B cell (primary cell): ENCODE measurements at regions of chr9 and their contacts with region 1.

Region 1: GRCh38 chr9:35657546-35658136 is at the start of gene RMRP:
- DNase-seq: peak; percentile 97
- ATAC-seq: peak; percentile 79
- H3K4me3 ChIP-seq: peak within 1 kb of the TSS; percentile 84 to 93 (median 87)
- H3K4me3 Mint-ChIP-seq: peak within 1 kb of the TSS; percentile 94
- H3K27ac ChIP-seq: peak within 1 kb of the TSS; percentile 99 to 100
- H3K27ac Mint-ChIP-seq: peak within 1 kb of the TSS; percentile 97
- H3K4me1 ChIP-seq: peaks cover 39 to 62% of the 10 kb centered on the region in 2 donors
- H3K4me1 Mint-ChIP-seq: peaks cover 66% of the 10 kb centered on the region
- H3K27me3 ChIP-seq: no peaks in the 10 kb centered on the region
- H3K27me3 Mint-ChIP-seq: no peaks in the 10 kb centered on the region
- CTCF ChIP-seq: no peak
- total RNA-seq, gene RMRP: 7,890 and 7,920 TPM in 2 replicates

Region 2: DNA sequence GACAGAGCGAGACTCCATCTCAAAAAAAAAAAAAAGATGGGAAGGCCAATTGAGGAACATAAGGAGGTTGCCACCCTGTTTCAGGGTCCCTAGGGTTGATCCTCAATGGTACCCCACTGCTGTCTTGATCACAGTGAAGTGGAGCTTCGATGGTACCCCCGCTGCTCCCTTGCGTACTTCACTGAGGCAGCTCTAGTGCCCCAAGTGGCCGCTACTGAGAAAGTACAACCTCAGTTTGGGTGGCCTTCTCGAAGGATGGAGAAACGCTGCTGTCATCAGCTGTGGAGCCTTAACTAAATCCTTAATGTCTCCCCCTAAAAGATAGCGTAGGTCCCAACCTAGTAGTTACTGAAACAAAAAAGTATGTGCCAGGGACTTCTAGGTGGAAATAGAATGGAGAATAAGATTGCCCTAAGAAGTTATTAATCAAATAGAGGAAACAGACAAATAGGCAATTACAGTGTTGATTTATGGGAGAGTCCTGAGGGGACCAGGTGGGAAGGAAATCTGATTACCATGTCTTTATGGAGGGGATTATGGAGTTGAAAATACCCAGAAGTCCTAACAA is 46.3 kb before region 1 on chr9:
- CTCF ChIA-PET with region 1: interaction called, 357 read pairs
- POLR2A ChIA-PET with region 1: interaction called, 24 read pairs
- intact Hi-C with region 1: no loop called
- DNase-seq: peak; percentile 72
- ATAC-seq: peak; percentile 90
- H3K4me3 ChIP-seq: no peak overlapping the region
- H3K4me3 Mint-ChIP-seq: no peak overlapping the region
- H3K27ac ChIP-seq: peak overlapping the region in 1 of 2 donors; percentile 45
- H3K27ac Mint-ChIP-seq: peak overlapping the region; percentile 77
- H3K4me1 ChIP-seq: peaks cover 59 to 85% of the 10 kb centered on the region in 2 donors
- H3K4me1 Mint-ChIP-seq: peaks cover 67% of the 10 kb centered on the region
- H3K27me3 ChIP-seq: no peaks in the 10 kb centered on the region
- H3K27me3 Mint-ChIP-seq: no peaks in the 10 kb centered on the region
- CTCF ChIP-seq: peak; percentile 76

Region 3: GRCh38 chr9:35646533-35647265 is 10.9 kb before region 1 on chr9:
- CTCF ChIA-PET with region 1: interaction called, 161 read pairs
- POLR2A ChIA-PET with region 1: interaction called, 62 read pairs
- intact Hi-C with region 1: loop called (anchors 1 kb)
- DNase-seq: peak; percentile 95
- ATAC-seq: peak; percentile 89
- H3K4me3 ChIP-seq: peak overlapping the region; percentile 76 to 90 (median 84)
- H3K4me3 Mint-ChIP-seq: peak overlapping the region; percentile 97
- H3K27ac ChIP-seq: peak overlapping the region; percentile 88 to 95
- H3K27ac Mint-ChIP-seq: peak overlapping the region; percentile 97
- H3K4me1 ChIP-seq: peaks cover 76 to 92% of the 10 kb centered on the region in 2 donors
- H3K4me1 Mint-ChIP-seq: peaks cover 81% of the 10 kb centered on the region
- H3K27me3 ChIP-seq: no peaks in the 10 kb centered on the region
- H3K27me3 Mint-ChIP-seq: no peaks in the 10 kb centered on the region
- CTCF ChIP-seq: peak; percentile 94

Region 4: DNA sequence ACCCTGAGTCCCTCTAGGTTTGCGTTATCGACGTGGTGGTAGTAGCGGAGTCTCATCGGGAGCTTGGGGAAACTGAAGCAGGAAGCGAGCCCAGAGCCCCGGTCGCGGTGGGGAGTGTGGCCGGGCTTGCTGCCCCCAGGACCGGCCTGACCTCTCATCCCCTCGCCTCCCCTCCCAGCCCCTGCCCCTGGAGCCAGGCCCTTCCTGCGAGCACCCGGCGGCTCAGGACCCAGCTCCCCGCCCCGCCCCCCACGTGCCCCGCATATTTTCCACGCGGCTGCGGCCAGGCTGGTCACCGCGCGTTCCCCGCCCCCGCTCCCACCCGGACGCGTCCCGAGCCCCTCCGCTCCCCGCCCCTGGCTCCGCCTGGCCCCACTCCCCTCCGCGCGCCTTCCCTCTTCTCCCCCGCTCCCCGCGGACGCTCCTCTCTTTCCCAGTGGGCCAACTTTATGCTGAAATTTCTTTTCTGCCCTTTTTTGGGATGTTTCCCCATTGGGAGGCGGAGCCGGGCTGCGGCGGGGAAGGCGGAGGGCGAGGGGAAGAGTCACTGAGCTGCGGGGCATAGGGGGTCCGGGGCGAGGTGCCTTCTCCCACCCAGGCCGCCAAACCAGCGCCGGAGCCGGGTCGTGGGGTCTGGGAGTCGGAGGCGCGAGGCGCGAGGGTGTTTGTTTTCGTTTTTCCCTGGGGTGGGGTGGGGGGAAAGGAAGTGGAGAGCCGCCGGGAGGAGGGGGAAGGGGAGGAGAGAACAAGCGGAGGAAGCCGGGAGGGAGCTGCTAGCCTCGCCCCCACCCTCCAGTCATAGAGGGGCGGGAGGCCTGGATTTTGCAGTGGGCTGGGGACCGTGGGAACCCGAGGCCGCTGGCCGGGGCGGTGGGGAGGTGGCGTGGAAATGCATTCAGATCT is 33.0 kb after region 1 on chr9:
- CTCF ChIA-PET with region 1: interaction called, 140 read pairs
- POLR2A ChIA-PET with region 1: interaction called, 11 read pairs
- intact Hi-C with region 1: loop called (anchors 1 kb)
- DNase-seq: peak; percentile 38
- ATAC-seq: peak; percentile 48
- H3K4me3 ChIP-seq: peak overlapping the region; percentile 56 to 89 (median 67)
- H3K4me3 Mint-ChIP-seq: peak overlapping the region; percentile 88
- H3K27ac ChIP-seq: peak overlapping the region in 1 of 2 donors; percentile 65
- H3K27ac Mint-ChIP-seq: peak overlapping the region; percentile 65
- H3K4me1 ChIP-seq: peaks cover 3 to 17% of the 10 kb centered on the region in 2 donors
- H3K4me1 Mint-ChIP-seq: peaks cover 11% of the 10 kb centered on the region
- H3K27me3 ChIP-seq: no peaks in the 10 kb centered on the region
- H3K27me3 Mint-ChIP-seq: no peaks in the 10 kb centered on the region
- CTCF ChIP-seq: no peak

Region 5: GRCh38 chr9:35716230-35716629 is 58.6 kb after region 1 on chr9:
- CTCF ChIA-PET with region 1: interaction called, 5 read pairs
- POLR2A ChIA-PET with region 1: interaction called, 8 read pairs
- intact Hi-C with region 1: loop called (anchors 1 kb)
- DNase-seq: no peak
- ATAC-seq: no peak
- H3K4me3 ChIP-seq: no peak overlapping the region
- H3K4me3 Mint-ChIP-seq: no peak overlapping the region
- H3K27ac ChIP-seq: no peak overlapping the region
- H3K27ac Mint-ChIP-seq: peak overlapping the region; percentile 65
- H3K4me1 ChIP-seq: peaks cover 16 to 24% of the 10 kb centered on the region in 2 donors
- H3K4me1 Mint-ChIP-seq: peaks cover 26% of the 10 kb centered on the region
- H3K27me3 ChIP-seq: no peaks in the 10 kb centered on the region
- H3K27me3 Mint-ChIP-seq: no peaks in the 10 kb centered on the region
- CTCF ChIP-seq: no peak

Region 6: DNA sequence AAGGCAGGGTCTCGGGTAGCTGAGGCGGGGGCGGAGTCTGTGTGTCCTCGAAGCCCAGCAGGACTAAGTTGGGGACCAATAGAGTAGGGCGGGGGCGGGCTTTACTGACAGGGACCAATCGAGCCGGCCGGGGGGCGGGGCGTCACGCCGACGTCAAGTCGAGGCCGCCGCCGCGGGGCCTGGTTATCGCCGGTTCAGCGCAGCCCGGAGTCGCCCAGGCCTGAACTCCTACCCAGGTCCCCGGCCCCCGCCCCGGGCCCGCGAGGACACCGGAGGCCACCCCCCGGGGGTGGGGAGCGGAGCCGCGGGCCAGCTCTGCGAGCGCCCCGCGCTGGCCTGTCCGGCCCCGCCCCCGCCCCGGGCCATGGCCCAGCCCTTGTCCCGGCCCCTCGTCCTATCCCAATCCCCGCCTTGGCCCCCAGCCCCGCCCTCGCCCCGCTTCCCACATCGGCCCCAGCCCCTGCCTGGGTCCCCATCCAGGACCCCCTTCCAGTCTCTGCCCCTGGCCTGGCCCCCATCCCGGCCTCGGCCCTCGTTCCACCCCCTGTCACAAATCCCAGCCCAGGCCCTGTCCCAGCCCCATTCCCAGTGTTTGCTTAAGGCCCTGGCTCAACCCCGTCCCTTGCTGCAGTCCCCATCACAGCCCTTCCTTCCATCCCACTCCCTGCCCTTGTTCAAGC is 171.6 kb after region 1 on chr9 and contains the start of gene TMEM8B:
- CTCF ChIA-PET with region 1: interaction called, 10 read pairs
- POLR2A ChIA-PET with region 1: no interaction called
- intact Hi-C with region 1: loop called (anchors 5 kb)
- DNase-seq: peak; percentile 94
- ATAC-seq: peak; percentile 92
- H3K4me3 ChIP-seq: peak within 1 kb of the TSS; percentile 32 to 80 (median 78)
- H3K4me3 Mint-ChIP-seq: peak within 1 kb of the TSS; percentile 96
- H3K27ac ChIP-seq: peak within 1 kb of the TSS; percentile 60 to 78
- H3K27ac Mint-ChIP-seq: peak within 1 kb of the TSS; percentile 89
- H3K4me1 ChIP-seq: peaks cover 24 to 35% of the 10 kb centered on the region in 2 donors
- H3K4me1 Mint-ChIP-seq: peaks cover 44% of the 10 kb centered on the region
- H3K27me3 ChIP-seq: no peaks in the 10 kb centered on the region
- H3K27me3 Mint-ChIP-seq: no peaks in the 10 kb centered on the region
- CTCF ChIP-seq: no peak
- total RNA-seq, gene TMEM8B: 13.6 and 14.5 TPM in 2 replicates